Activated CD4-positive, alpha-beta memory T cell treated with anti-CD3 and anti-CD28 coated beads for 36 hours (primary cell): ENCODE measurements at regions of chr6 and their contacts with region 1.

Region 1: GRCh38 chr6:85669735-85670194 is 27.1 kb upstream of the SYNCRIP start:
- DNase-seq: peak; percentile 69
- H3K4me3 Mint-ChIP-seq: peak overlapping the region; percentile 63
- H3K27ac Mint-ChIP-seq: peak overlapping the region; percentile 93
- H3K4me1 Mint-ChIP-seq: peaks cover 57% of the 10 kb centered on the region
- H3K27me3 Mint-ChIP-seq: no peaks in the 10 kb centered on the region

Region 2: DNA sequence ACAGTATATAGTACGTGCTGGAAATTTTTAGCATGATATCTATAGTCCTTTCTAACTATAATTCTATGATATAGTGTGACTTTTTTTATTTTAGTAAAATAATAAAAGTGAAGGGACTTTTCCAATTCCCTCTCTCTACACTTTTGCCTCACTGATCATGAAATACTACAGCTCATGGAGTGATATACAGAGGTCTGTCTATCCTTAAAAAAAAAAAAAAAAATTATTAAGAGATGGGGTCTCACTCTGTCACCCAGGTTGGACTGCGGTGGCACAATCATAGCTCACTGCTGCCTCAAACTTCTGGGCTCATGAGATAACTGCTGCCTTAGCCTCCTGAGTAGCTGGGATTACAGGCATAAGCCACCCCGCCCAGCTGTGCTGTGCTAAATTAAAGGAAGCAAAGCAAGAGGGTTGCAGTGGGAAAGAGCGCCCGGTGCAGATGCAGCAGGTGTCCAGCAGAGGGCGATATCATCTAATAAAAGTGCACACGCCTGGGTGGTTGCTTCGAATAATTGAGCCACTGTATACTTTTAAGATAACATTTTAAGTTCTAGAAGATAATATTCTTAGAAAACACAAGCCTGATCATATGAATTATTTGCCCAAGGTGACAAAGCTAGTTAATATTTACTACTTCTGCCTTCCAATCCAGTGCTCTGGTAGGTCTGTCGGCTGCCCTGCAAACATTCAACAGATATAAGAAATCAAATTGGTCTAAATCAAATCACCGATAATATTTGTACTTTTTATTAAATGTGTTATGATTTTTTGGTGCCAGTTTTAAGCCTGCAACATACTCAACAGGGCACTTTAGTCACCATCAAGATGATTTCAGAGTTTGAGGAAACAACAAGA is 314.8 kb before region 1 on chr6:
- CTCF ChIA-PET with region 1: no interaction called
- POLR2A ChIA-PET with region 1: no interaction called
- intact Hi-C with region 1: loop called (anchors 2 kb)
- DNase-seq: peak; percentile 71
- H3K4me3 Mint-ChIP-seq: no peak overlapping the region
- H3K27ac Mint-ChIP-seq: no peak overlapping the region
- H3K4me1 Mint-ChIP-seq: no peaks in the 10 kb centered on the region
- H3K27me3 Mint-ChIP-seq: peaks cover 5% of the 10 kb centered on the region

Region 3: GRCh38 chr6:85506441-85507093 is 163.2 kb before region 1 on chr6:
- CTCF ChIA-PET with region 1: no interaction called
- POLR2A ChIA-PET with region 1: no interaction called
- intact Hi-C with region 1: loop called (anchors 1 kb)
- DNase-seq: peak; percentile 70
- H3K4me3 Mint-ChIP-seq: no peak overlapping the region
- H3K27ac Mint-ChIP-seq: peak overlapping the region; percentile 4
- H3K4me1 Mint-ChIP-seq: peaks cover 10% of the 10 kb centered on the region
- H3K27me3 Mint-ChIP-seq: no peaks in the 10 kb centered on the region

Region 4: DNA sequence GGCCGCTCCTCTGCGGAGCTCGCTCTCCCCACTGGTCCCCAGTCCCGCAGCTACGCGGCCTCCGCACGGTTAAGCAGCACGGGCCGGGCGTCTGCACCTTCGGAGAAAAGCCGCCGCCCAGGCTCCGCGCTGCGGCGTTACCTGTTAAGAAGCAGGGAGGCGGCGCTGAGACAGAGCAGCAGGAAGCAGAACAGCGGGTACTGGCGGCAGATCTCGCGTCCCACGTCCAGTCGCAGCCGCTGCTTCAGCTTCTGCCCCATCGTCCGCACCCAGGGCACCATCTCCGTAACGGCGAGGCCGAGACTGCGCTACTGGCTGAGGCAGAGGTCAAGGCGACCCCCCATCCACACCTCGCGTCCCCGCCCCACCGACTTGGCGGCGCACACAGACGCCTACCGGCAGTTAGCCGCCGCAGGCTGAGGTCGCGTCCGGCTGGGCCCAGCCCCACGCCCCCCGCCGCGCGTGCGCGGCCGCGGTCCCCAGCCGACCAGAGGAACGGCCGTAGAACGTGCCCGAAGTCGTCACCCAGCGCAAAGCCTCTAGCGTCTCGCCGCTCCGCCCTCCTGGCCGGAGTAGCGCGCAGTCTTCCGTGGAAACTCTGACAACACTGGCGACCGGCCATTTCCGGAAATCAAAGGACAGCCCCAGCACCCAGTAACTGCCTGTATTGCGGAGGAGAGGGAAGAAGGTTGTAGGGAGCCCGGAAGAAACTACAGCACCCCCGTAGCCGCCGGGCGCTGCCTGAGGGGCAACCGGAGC is 76.1 kb before region 1 on chr6 and contains the start of gene SNX14:
- CTCF ChIA-PET with region 1: no interaction called
- POLR2A ChIA-PET with region 1: interaction called, 14 read pairs
- intact Hi-C with region 1: loop called (anchors 2 kb)
- DNase-seq: peak; percentile 90
- H3K4me3 Mint-ChIP-seq: peak within 1 kb of the TSS; percentile 84
- H3K27ac Mint-ChIP-seq: peak within 1 kb of the TSS; percentile 94
- H3K4me1 Mint-ChIP-seq: peaks cover 33% of the 10 kb centered on the region
- H3K27me3 Mint-ChIP-seq: no peaks in the 10 kb centered on the region
- total RNA-seq, gene SNX14: 50.9 to 59.6 TPM

Region 5: DNA sequence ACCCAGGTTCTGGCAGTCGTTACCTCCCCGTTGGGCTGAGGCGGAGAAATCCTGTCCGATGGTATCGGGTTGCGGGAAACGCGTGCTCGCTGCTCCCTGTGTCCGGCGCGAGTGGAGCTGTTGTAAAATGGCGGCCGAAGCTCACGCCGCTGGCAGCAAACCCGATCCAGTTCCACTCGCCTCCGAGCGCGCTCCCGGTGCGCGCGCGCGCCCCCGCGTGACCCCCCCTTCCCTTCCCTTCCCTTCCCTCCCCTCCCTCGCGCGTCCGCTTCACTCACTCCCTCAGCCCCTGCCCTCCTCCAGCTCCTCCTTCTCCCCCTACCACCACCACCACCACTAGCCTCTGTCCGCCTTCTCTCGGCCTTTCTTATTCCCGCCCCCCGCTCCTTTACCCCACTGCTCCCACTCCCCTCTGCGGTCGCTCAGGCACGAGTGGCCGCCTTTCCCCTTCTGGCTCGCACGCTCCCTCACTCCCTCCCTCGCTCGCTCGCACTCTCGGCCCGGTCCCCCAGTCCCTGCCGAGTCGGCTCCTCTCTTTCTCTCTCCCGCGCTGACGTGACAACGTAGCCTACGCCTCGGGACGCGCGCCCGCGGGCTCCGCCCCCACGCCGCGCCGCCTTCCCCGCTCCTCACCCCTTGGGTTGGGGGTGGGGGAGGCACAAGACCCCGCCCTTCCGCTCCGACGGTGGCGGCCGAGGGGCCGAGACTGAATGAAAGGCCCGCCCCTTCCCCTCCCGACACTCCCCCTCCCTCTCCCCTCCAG is 26.8 kb before region 1 on chr6 and contains the start of gene SYNCRIP:
- CTCF ChIA-PET with region 1: interaction called, 20 read pairs
- POLR2A ChIA-PET with region 1: interaction called, 668 read pairs
- intact Hi-C with region 1: loop called (anchors 1 kb)
- DNase-seq: peak; percentile 98
- H3K4me3 Mint-ChIP-seq: peak within 1 kb of the TSS; percentile 86
- H3K27ac Mint-ChIP-seq: peak within 1 kb of the TSS; percentile 98
- H3K4me1 Mint-ChIP-seq: peaks cover 39% of the 10 kb centered on the region
- H3K27me3 Mint-ChIP-seq: no peaks in the 10 kb centered on the region
- total RNA-seq, gene SYNCRIP: 138 to 139 TPM

Region 6: GRCh38 chr6:86152546-86152945 is 482.8 kb after region 1 on chr6:
- CTCF ChIA-PET with region 1: no interaction called
- POLR2A ChIA-PET with region 1: no interaction called
- intact Hi-C with region 1: no loop called
- DNase-seq: no peak
- H3K4me3 Mint-ChIP-seq: no peak overlapping the region
- H3K27ac Mint-ChIP-seq: no peak overlapping the region
- H3K4me1 Mint-ChIP-seq: no peaks in the 10 kb centered on the region
- H3K27me3 Mint-ChIP-seq: no peaks in the 10 kb centered on the region